ENCODE measurements at regions of chr21 and their contacts with region 1.

Region 1: GRCh38 chr21:38159355-38159754 is 97.4 kb upstream of the KCNJ15 start:
- DNase-seq: peak; percentile 64
- CTCF ChIP-seq: peak; percentile 81

Region 2: GRCh38 chr21:38112219-38112789 is 47.1 kb before region 1 on chr21:
- CTCF ChIA-PET with region 1: no interaction called
- POLR2A ChIA-PET with region 1: no interaction called
- DNase-seq: no peak
- CTCF ChIP-seq: no peak

Region 3: DNA sequence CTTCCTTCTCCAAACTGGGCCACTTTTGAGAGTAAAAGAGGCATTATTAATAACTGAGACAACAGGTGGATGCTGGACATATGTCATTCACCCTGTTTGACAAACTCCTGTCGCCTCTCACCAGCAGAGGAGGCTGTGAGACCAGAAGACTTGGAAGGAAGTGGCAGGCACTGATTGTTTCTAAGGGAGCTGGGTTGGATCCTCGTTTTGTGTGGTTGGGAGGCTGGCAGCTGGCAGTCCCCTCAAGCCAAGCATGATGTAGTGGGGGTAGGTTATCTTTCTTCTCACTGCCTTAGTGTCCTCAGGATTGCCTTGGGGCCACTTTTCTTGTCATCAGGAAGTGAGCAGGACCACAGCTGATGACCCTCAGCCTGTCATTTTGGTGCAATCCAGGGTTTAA is 10.9 kb after region 1 on chr21:
- CTCF ChIA-PET with region 1: interaction called, 26 read pairs
- POLR2A ChIA-PET with region 1: no interaction called
- DNase-seq: peak; percentile 20
- CTCF ChIP-seq: peak; percentile 29